Mammary epithelial cell (primary cell): ENCODE measurements at regions of chr16 and their contacts with region 1.

Region 1: GRCh38 chr16:54286090-54286993 is at the start of gene IRX3:
- DNase-seq: peak; percentile 94
- H3K4me3 ChIP-seq: peak within 1 kb of the TSS; percentile 66 to 85 (median 80)
- H3K27ac ChIP-seq: peak within 1 kb of the TSS; percentile 74
- H3K4me1 ChIP-seq: peaks cover 30% of the 10 kb centered on the region
- H3K27me3 ChIP-seq: no peaks in the 10 kb centered on the region
- CTCF ChIP-seq: no peak
- total RNA-seq, gene IRX3: 7.2 to 15.5 TPM

Region 2: GRCh38 chr16:53549970-53550690 is 736.2 kb before region 1 on chr16:
- CTCF ChIA-PET with region 1: no interaction called
- dilution Hi-C with region 1: no loop called
- in situ Hi-C with region 1: loop called in 1 of 2 experiments (anchors 25 kb)
- intact Hi-C with region 1: loop called (anchors 2 kb)
- DNase-seq: peak; percentile 60
- H3K4me3 ChIP-seq: no peak overlapping the region
- H3K27ac ChIP-seq: no peak overlapping the region
- H3K4me1 ChIP-seq: no peaks in the 10 kb centered on the region
- H3K27me3 ChIP-seq: no peaks in the 10 kb centered on the region
- CTCF ChIP-seq: peak; percentile 72 to 76

Region 3: DNA sequence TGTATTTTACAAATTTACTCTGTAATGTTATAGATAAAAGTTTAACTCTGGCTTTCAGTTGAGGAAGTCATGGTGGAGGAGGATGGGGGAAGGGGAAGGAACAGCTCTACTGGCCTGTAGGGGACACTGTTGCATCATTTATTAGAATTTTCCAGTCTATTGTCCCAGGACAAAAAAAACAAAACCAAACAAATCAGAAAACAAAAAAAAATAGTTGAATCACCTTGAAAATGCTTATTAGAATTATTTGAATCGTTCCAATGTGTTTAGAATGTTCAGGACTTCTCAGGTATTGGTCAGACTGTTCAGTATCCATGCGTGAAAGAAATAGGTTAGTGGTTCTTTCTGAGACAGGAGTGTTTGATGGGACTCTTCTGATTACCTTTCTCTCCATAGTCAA is 340.3 kb before region 1 on chr16:
- CTCF ChIA-PET with region 1: no interaction called
- dilution Hi-C with region 1: no loop called
- in situ Hi-C with region 1: no loop called
- intact Hi-C with region 1: loop called (anchors 2 kb)
- DNase-seq: peak; percentile 43
- H3K4me3 ChIP-seq: no peak overlapping the region
- H3K27ac ChIP-seq: no peak overlapping the region
- H3K4me1 ChIP-seq: peaks cover 3% of the 10 kb centered on the region
- H3K27me3 ChIP-seq: no peaks in the 10 kb centered on the region
- CTCF ChIP-seq: peak; percentile 83 to 94

Region 4: DNA sequence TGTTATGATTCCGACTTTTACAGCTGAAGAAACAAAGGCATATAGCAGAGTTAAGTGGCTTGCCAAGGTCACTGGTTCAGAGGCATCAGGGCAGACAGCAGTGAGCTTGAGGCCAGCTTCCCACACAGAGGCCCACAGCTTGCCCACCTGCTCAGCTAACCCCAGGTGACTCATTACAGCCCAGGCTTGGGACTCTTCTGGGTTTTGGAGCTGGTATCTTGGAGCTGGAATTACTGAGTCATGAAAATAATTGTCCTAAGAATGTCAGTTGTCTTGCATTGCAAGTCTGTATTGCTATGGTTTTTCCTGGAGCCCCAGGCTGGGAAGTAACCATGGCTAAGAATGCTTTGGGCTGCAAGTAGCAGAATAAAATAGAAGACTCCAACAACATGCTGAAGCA is 32.6 kb after region 1 on chr16:
- CTCF ChIA-PET with region 1: no interaction called
- dilution Hi-C with region 1: no loop called
- in situ Hi-C with region 1: no loop called
- intact Hi-C with region 1: no loop called
- DNase-seq: no peak
- H3K4me3 ChIP-seq: no peak overlapping the region
- H3K27ac ChIP-seq: no peak overlapping the region
- H3K4me1 ChIP-seq: no peaks in the 10 kb centered on the region
- H3K27me3 ChIP-seq: peaks cover 3% of the 10 kb centered on the region
- CTCF ChIP-seq: no peak

Region 5: GRCh38 chr16:54447591-54448440 is 161.5 kb after region 1 on chr16:
- CTCF ChIA-PET with region 1: no interaction called
- dilution Hi-C with region 1: no loop called
- in situ Hi-C with region 1: no loop called
- intact Hi-C with region 1: loop called (anchors 2 kb)
- DNase-seq: peak; percentile 84
- H3K4me3 ChIP-seq: no peak overlapping the region
- H3K27ac ChIP-seq: no peak overlapping the region
- H3K4me1 ChIP-seq: peaks cover 21% of the 10 kb centered on the region
- H3K27me3 ChIP-seq: no peaks in the 10 kb centered on the region
- CTCF ChIP-seq: no peak

Region 6: DNA sequence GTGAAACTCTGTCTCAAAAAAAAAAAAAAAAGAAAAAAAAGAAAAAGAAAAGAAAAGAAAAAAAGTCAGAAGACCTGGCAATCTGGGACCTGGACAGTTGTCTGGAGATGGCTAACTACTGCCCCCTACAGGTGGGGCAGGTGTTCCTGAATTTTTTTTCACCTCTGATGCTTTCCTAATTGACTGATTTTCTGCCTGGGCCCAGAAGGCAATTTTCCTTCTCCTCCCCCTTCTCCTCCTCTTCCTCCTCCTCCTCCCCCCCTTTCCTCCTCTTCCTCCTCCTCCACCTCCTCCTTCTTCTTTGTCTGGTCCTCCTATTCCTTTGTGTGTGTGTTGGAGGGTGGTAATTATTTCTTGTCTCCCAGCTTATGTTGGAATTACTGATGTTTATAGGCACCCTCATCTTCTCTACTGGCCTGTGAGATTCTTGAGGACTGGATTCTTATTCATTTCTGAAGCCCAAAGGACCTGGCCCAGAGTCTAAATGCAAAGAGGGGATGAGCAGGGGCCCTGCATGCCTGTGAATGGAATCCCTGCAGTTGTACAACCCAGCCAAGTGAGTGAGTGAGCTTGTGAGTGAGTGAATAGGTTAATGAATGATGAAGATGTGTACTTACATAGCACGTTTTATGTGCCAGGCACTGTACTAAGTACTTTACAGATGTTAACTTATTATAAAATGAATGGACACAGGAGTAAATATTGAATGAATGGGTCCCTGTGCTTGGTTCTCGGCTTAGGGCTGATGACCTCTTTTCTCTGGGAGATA is 671.2 kb after region 1 on chr16:
- CTCF ChIA-PET with region 1: interaction called, 3 read pairs
- dilution Hi-C with region 1: no loop called
- in situ Hi-C with region 1: no loop called
- intact Hi-C with region 1: loop called (anchors 5 kb)
- DNase-seq: peak; percentile 43
- H3K4me3 ChIP-seq: no peak overlapping the region
- H3K27ac ChIP-seq: no peak overlapping the region
- H3K4me1 ChIP-seq: no peaks in the 10 kb centered on the region
- H3K27me3 ChIP-seq: no peaks in the 10 kb centered on the region
- CTCF ChIP-seq: peak; percentile 68 to 82

Region 7: GRCh38 chr16:55370762-55371482 is 1084.6 kb after region 1 on chr16:
- CTCF ChIA-PET with region 1: no interaction called
- dilution Hi-C with region 1: no loop called
- in situ Hi-C with region 1: no loop called
- intact Hi-C with region 1: loop called (anchors 5 kb)
- DNase-seq: peak; percentile 42
- H3K4me3 ChIP-seq: no peak overlapping the region
- H3K27ac ChIP-seq: no peak overlapping the region
- H3K4me1 ChIP-seq: peaks cover 17% of the 10 kb centered on the region
- H3K27me3 ChIP-seq: no peaks in the 10 kb centered on the region
- CTCF ChIP-seq: peak; percentile 42 to 71